AG04449 (cell line): ENCODE measurements at regions of chr2 and their contacts with region 1.

Region 1: DNA sequence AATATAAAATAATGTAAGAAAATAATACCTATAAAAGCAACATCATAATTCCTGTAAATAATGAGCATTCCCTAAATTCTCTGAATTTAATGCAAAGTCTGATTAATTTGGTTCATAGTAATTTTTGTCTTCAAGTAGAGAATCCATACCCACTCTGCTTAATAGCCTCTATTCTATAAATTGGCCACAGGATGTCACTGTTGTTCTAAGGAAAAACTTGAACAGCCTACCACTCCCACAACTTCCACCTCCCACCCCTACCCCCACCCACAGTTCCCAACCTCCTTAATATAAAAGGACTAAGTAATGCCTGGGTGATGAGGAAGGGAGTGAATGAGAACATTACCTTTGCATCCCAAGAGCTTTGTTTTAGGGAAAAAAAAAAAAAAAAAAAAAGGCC is 27.2 kb upstream of the BBS5 start:
- DNase-seq: no peak
- H3K4me3 ChIP-seq: no peak overlapping the region
- CTCF ChIP-seq: peak; percentile 23

Region 2: GRCh38 chr2:169439900-169440299 is 12.2 kb before region 1 on chr2:
- CTCF ChIA-PET with region 1: interaction called, 15 read pairs
- POLR2A ChIA-PET with region 1: no interaction called
- DNase-seq: no peak
- H3K4me3 ChIP-seq: no peak overlapping the region
- CTCF ChIP-seq: no peak

Region 3: DNA sequence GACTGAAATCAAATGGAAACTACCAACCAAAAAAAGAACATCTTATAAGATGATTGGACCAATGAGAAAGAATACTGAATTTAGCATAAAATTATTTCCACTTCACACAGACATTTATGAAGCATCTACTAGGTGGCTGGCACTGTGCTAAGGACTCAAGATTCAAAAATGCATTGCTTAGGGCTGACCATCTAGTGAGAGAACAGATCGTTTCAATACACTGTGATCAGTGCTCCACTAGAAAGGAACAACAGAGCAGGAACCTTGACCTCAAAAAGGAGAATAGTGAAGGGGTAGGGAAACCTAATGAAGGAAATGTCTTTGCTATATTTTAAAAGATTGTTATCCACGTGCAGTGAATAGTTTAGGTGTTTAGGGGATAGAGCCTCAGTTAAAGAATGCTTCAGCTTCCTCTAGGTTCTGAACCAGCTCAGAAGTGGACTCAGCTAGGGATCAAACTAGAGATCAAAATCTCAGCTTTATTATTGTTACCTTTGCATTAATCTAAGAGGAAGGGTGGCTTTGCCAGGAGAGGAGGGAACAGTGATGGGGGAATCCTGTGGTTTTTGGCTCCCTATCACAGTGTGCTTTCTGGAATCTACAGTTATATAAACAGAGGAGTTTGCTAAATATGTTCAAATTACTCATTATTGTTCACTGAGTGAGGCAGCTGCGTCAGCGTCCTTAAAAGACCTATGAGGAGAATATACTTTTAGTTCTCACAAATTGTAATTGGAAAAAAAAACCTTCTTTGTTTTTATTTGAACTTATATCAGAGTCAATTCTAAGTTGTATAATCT is 11.0 kb after region 1 on chr2:
- CTCF ChIA-PET with region 1: interaction called, 35 read pairs
- POLR2A ChIA-PET with region 1: interaction called, 3 read pairs
- DNase-seq: peak; percentile 53
- H3K4me3 ChIP-seq: no peak overlapping the region; the same call in 1 of the 2 replicates
- CTCF ChIP-seq: no peak

Region 4: GRCh38 chr2:169479257-169480078 is 27.4 kb after region 1 on chr2 and contains the start of gene BBS5:
- CTCF ChIA-PET with region 1: interaction called, 11 read pairs
- POLR2A ChIA-PET with region 1: no interaction called
- DNase-seq: peak; percentile 41
- H3K4me3 ChIP-seq: peak within 1 kb of the TSS; percentile 81
- CTCF ChIP-seq: peak; percentile 47

Region 5: GRCh38 chr2:169636440-169637097 is 184.5 kb after region 1 on chr2:
- CTCF ChIA-PET with region 1: no interaction called
- POLR2A ChIA-PET with region 1: no interaction called
- DNase-seq: no peak
- H3K4me3 ChIP-seq: no peak overlapping the region
- CTCF ChIP-seq: no peak